CD4-positive, alpha-beta memory T cell (primary cell): ENCODE measurements at regions of chr5 and their contacts with region 1.

Region 1: GRCh38 chr5:177403792-177404640 is 3.6 kb upstream of the PFN3 start:
- DNase-seq: peak; percentile 84 to 85 (median 85)
- H3K4me3 ChIP-seq: peak overlapping the region; percentile 42 to 70
- H3K4me3 Mint-ChIP-seq: peak overlapping the region; percentile 82 to 93 (median 86)
- H3K27ac ChIP-seq: peak overlapping the region; percentile 63
- H3K27ac Mint-ChIP-seq: peak overlapping the region in 6 of 7 donors; percentile 57 to 88 (median 80)
- H3K4me1 ChIP-seq: peaks cover 39% of the 10 kb centered on the region
- H3K4me1 Mint-ChIP-seq: peaks cover 6 to 36% (median 22%) of the 10 kb centered on the region in 4 donors
- H3K27me3 ChIP-seq: no peaks in the 10 kb centered on the region
- H3K27me3 Mint-ChIP-seq: no peaks in the 10 kb centered on the region

Region 2: GRCh38 chr5:177311723-177312648 is 92.0 kb before region 1 on chr5 and contains the start of gene MXD3:
- CTCF ChIA-PET with region 1: interaction called, 86 read pairs
- POLR2A ChIA-PET with region 1: interaction called, 18 read pairs
- intact Hi-C with region 1: no loop called
- DNase-seq: peak; percentile 90 to 96 (median 93)
- H3K4me3 ChIP-seq: peak within 1 kb of the TSS; percentile 24 to 64
- H3K4me3 Mint-ChIP-seq: peak within 1 kb of the TSS; percentile 70 to 86 (median 80)
- H3K27ac ChIP-seq: peak within 1 kb of the TSS; percentile 49
- H3K27ac Mint-ChIP-seq: peak within 1 kb of the TSS; percentile 29 to 83 (median 75)
- H3K4me1 ChIP-seq: peaks cover 41% of the 10 kb centered on the region
- H3K4me1 Mint-ChIP-seq: peaks cover 17 to 49% (median 30%) of the 10 kb centered on the region in 4 donors
- H3K27me3 ChIP-seq: no peaks in the 10 kb centered on the region
- H3K27me3 Mint-ChIP-seq: no peaks in the 10 kb centered on the region
- total RNA-seq, gene MXD3: 17.3 TPM

Region 3: GRCh38 chr5:177357459-177358351 is 46.3 kb before region 1 on chr5 and contains the start of gene RGS14:
- CTCF ChIA-PET with region 1: interaction called, 32 read pairs
- POLR2A ChIA-PET with region 1: interaction called, 9 read pairs
- intact Hi-C with region 1: loop called (anchors 5 kb)
- DNase-seq: peak; percentile 85 to 91 (median 87)
- H3K4me3 ChIP-seq: peak within 1 kb of the TSS; percentile 92 to 95
- H3K4me3 Mint-ChIP-seq: peak within 1 kb of the TSS; percentile 84 to 97 (median 90)
- H3K27ac ChIP-seq: peak within 1 kb of the TSS; percentile 75
- H3K27ac Mint-ChIP-seq: peak within 1 kb of the TSS; percentile 89 to 97 (median 97)
- H3K4me1 ChIP-seq: peaks cover 71% of the 10 kb centered on the region
- H3K4me1 Mint-ChIP-seq: peaks cover 53 to 92% (median 73%) of the 10 kb centered on the region in 4 donors
- H3K27me3 ChIP-seq: no peaks in the 10 kb centered on the region
- H3K27me3 Mint-ChIP-seq: no peaks in the 10 kb centered on the region
- total RNA-seq, gene RGS14: 167 to 168 TPM

Region 4: DNA sequence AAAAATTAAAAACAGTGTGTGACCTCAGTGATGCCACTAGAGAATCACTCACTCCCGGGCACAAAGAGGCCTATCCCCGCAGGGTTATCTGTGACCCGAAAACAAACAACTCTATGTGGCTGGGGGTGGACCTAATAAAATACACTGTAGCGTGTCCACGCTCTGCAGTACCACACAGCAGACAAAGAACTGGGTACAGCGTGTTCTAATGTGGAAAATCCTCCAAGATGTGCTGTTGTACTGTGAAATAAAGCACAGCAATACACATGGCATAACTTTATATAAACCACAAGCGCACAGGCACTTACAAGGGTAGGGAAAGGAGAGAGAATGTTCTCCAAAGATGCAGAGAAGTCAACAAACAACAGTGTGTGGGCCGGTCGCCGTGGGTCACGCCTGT is 27.9 kb before region 1 on chr5:
- CTCF ChIA-PET with region 1: interaction called, 31 read pairs
- POLR2A ChIA-PET with region 1: interaction called, 19 read pairs
- intact Hi-C with region 1: loop called (anchors 2 kb)
- DNase-seq: no peak
- H3K4me3 ChIP-seq: no peak overlapping the region
- H3K4me3 Mint-ChIP-seq: no peak overlapping the region
- H3K27ac ChIP-seq: no peak overlapping the region
- H3K27ac Mint-ChIP-seq: peak overlapping the region; percentile 19 to 81 (median 55)
- H3K4me1 ChIP-seq: peaks cover 61% of the 10 kb centered on the region
- H3K4me1 Mint-ChIP-seq: peaks cover 38 to 72% (median 50%) of the 10 kb centered on the region in 4 donors
- H3K27me3 ChIP-seq: no peaks in the 10 kb centered on the region
- H3K27me3 Mint-ChIP-seq: no peaks in the 10 kb centered on the region

Region 5: GRCh38 chr5:177419051-177419450 is 15.0 kb after region 1 on chr5:
- CTCF ChIA-PET with region 1: interaction called, 307 read pairs
- POLR2A ChIA-PET with region 1: interaction called, 148 read pairs
- intact Hi-C with region 1: no loop called
- DNase-seq: no peak
- H3K4me3 ChIP-seq: no peak overlapping the region
- H3K4me3 Mint-ChIP-seq: no peak overlapping the region
- H3K27ac ChIP-seq: no peak overlapping the region
- H3K27ac Mint-ChIP-seq: no peak overlapping the region
- H3K4me1 ChIP-seq: peaks cover 20% of the 10 kb centered on the region
- H3K4me1 Mint-ChIP-seq: peaks cover 10 to 22% (median 14%) of the 10 kb centered on the region in 4 donors
- H3K27me3 ChIP-seq: no peaks in the 10 kb centered on the region
- H3K27me3 Mint-ChIP-seq: no peaks in the 10 kb centered on the region

Region 6: GRCh38 chr5:177440211-177440971 is 36.4 kb after region 1 on chr5:
- CTCF ChIA-PET with region 1: interaction called, 821 read pairs
- POLR2A ChIA-PET with region 1: interaction called, 555 read pairs
- intact Hi-C with region 1: no loop called
- DNase-seq: peak; percentile 66 to 90 (median 73)
- H3K4me3 ChIP-seq: no peak overlapping the region
- H3K4me3 Mint-ChIP-seq: peak overlapping the region in 7 of 8 donors; percentile 42 to 85 (median 56)
- H3K27ac ChIP-seq: peak overlapping the region; percentile 94
- H3K27ac Mint-ChIP-seq: peak overlapping the region; percentile 88 to 98 (median 95)
- H3K4me1 ChIP-seq: peaks cover 80% of the 10 kb centered on the region
- H3K4me1 Mint-ChIP-seq: peaks cover 37 to 81% (median 56%) of the 10 kb centered on the region in 4 donors
- H3K27me3 ChIP-seq: no peaks in the 10 kb centered on the region
- H3K27me3 Mint-ChIP-seq: no peaks in the 10 kb centered on the region

Region 7: DNA sequence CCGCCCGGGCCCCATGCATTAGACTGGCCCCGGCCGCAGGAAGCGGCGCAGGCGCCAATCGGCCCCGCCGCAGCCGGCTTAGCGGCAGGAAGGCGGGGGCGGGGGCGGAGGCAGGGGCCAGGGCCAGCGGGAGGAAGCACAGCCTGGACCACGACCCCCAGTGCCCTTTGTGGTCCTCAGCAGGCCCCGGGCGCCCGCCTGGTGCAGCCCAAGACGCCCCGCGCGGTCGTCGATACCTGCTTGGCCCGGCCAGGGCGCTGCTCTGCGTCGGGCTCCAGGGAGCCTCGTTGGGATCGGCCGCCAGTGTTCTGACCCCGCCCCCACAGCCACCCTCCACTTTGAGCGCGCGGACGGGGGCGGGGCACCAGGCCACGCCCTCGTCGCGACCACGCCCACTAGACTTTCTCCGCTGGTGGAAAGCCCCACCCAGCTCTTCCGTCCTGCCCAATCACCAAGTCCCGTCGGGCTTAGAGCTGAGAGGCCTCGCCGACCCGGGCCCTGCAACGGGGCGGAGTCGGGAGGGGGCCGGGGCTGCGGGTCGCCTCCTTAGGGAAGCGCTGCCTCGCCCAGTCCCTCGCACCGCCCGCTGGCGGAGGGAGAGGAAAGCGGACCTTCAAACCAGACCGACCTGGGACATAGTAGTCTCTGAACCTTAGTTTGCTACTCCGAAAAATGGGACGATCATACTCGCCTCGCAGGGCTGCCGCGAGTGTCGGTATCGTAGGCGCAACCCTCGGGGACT is 93.4 kb after region 1 on chr5 and contains the start of gene PDLIM7:
- CTCF ChIA-PET with region 1: interaction called, 33 read pairs
- POLR2A ChIA-PET with region 1: interaction called, 19 read pairs
- intact Hi-C with region 1: loop called (anchors 1 kb)
- DNase-seq: peak; percentile 91 to 94 (median 92)
- H3K4me3 ChIP-seq: peak within 1 kb of the TSS; percentile 65 to 75
- H3K4me3 Mint-ChIP-seq: peak within 1 kb of the TSS; percentile 84 to 93 (median 88)
- H3K27ac ChIP-seq: peak within 1 kb of the TSS; percentile 49
- H3K27ac Mint-ChIP-seq: peak within 1 kb of the TSS; percentile 57 to 92 (median 85)
- H3K4me1 ChIP-seq: peaks cover 11% of the 10 kb centered on the region
- H3K4me1 Mint-ChIP-seq: peaks cover 8 to 26% (median 20%) of the 10 kb centered on the region in 4 donors
- H3K27me3 ChIP-seq: no peaks in the 10 kb centered on the region
- H3K27me3 Mint-ChIP-seq: no peaks in the 10 kb centered on the region
- total RNA-seq, gene PDLIM7: 5.8 to 7.3 TPM